ENCODE measurements at regions of chr3 and their contacts with region 1.

Region 1: DNA sequence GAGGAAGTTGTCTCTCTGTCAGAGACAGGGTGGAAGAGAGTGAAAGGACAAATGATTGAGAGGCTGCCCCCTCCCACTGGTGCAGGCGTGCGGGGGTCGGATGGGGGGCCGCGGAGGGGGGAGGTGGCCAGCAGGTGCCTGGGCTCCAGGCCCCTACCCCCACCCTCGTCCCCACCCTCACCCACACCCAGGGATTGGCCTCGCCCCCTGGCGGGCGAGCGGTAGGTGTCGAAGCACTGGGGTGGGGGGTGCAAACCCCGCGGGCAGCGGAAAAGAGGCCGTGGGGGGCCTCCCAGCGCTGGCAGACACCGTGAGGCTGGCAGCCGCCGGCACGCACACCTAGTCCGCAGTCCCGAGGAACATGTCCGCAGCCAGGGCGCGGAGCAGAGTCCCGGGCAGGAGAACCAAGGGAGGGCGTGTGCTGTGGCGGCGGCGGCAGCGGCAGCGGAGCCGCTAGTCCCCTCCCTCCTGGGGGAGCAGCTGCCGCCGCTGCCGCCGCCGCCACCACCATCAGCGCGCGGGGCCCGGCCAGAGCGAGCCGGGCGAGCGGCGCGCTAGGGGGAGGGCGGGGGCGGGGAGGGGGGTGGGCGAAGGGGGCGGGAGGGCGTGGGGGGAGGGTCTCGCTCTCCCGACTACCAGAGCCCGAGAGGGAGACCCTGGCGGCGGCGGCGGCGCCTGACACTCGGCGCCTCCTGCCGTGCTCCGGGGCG is at the start of gene KAT2B:
- DNase-seq: peak; percentile 84 to 92 (median 85)
- ATAC-seq: peak; percentile 68 to 84 (median 78)
- H3K4me3 ChIP-seq: peak within 1 kb of the TSS; percentile 59 to 95 (median 85)
- H3K27ac ChIP-seq: peak within 1 kb of the TSS; percentile 93 to 99 (median 98)
- H3K4me1 ChIP-seq: peaks cover 4 to 51% (median 40%) of the 10 kb centered on the region in 12 donors
- H3K27me3 ChIP-seq: no peaks in the 10 kb centered on the region
- CTCF ChIP-seq: peak; percentile 57 to 89 (median 71)
- POLR2A ChIP-seq: peak in 1 of 2 donors; percentile 48
- total RNA-seq, gene KAT2B: 45.9 to 82.8 (median 70.2) TPM

Region 2: DNA sequence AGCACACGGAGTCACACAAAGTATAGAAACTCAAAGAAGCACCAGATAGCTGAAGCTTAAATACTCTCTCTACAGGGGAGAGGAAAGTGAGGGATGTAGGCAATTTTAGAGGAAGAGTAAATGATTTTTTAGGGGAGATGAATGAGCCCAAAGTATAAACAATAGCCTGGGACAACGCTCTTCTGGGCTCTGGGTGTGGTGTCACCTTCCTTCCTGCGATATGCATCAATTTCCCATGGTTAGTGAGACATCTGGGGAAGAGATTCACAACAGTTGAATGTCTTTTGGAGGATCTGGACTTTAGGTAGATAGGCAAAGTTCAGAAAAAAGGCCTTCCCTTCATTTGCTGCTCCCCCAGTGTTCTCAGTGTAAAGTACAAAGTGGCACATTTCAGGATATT is 231.1 kb before region 1 on chr3:
- intact Hi-C with region 1: loop called in 1 of 10 experiments (anchors 5 kb)
- DNase-seq: no peak
- ATAC-seq: peak in 2 of 4 donors; percentile 39 to 86
- H3K4me3 ChIP-seq: no peak overlapping the region
- H3K27ac ChIP-seq: peak overlapping the region in 5 of 12 donors; percentile 2 to 49 (median 39)
- H3K4me1 ChIP-seq: peaks cover 0 to 3% (median 0%) of the 10 kb centered on the region in 12 donors
- H3K27me3 ChIP-seq: no peaks in the 10 kb centered on the region
- CTCF ChIP-seq: no peak
- POLR2A ChIP-seq: no peak

Region 3: DNA sequence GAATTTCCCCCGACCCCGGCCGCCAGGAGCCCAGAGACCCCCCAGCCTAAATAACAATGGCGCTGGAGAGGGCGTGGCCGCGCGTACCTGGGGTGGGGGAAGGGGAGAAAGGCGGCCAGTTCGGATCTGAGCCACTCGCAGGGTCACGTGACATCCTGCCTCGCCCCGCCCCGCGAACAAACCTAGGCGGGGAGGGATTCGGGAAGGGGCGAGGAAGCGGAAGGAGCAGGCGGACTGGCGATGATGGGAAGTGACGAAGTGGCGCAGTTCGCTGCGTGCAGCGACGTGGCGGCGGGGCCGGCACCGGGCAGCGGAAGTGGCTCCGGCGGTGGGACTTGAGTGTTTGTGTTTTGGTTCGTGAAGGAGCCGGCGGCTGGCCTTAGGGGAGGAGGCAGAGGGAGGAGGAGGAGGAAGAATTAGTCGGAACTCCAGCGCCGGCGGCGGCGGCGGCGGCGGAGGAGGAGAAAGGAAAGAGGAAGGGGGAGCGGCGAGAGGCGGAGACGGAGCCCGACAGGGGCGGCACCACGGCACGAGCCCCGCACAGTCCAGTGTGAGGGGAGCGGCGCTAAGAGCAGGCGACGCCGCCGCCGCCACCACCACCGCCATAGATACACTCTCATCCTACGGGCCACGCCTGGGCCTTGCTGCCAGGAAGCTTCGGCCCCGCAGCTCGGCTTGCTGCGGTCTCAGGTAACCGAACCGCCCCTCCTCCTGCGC is 92.9 kb before region 1 on chr3 and contains the start of gene RAB5A:
- intact Hi-C with region 1: loop called in 9 of 10 experiments (anchors 1 to 5 kb)
- DNase-seq: peak; percentile 98
- ATAC-seq: peak; percentile 97 to 99 (median 98)
- H3K4me3 ChIP-seq: peak within 1 kb of the TSS; percentile 65 to 99 (median 90)
- H3K27ac ChIP-seq: peak within 1 kb of the TSS; percentile 93 to 99 (median 98)
- H3K4me1 ChIP-seq: peaks cover 7 to 44% (median 25%) of the 10 kb centered on the region in 12 donors
- H3K27me3 ChIP-seq: no peaks in the 10 kb centered on the region
- CTCF ChIP-seq: no peak
- POLR2A ChIP-seq: peak in 1 of 2 donors; percentile 69
- total RNA-seq, gene RAB5A: 34.9 to 74.0 (median 61.9) TPM

Region 4: GRCh38 chr3:20080956-20081554 is 41.1 kb after region 1 on chr3:
- intact Hi-C with region 1: loop called in 5 of 10 experiments (anchors 5 kb)
- DNase-seq: peak; percentile 82 to 93 (median 86)
- ATAC-seq: peak; percentile 99 to 100 (median 100)
- H3K4me3 ChIP-seq: no peak overlapping the region
- H3K27ac ChIP-seq: peak overlapping the region; percentile 6 to 74 (median 54)
- H3K4me1 ChIP-seq: peaks cover 10 to 24% (median 20%) of the 10 kb centered on the region in 12 donors
- H3K27me3 ChIP-seq: no peaks in the 10 kb centered on the region
- CTCF ChIP-seq: no peak
- POLR2A ChIP-seq: no peak

Region 5: GRCh38 chr3:20141851-20142250 is 101.9 kb after region 1 on chr3:
- intact Hi-C with region 1: loop called in 3 of 10 experiments (anchors 5 kb)
- DNase-seq: peak in 4 of 5 donors; percentile 56 to 75 (median 69)
- ATAC-seq: peak; percentile 96 to 99 (median 98)
- H3K4me3 ChIP-seq: peak overlapping the region in 1 of 12 donors; percentile 27
- H3K27ac ChIP-seq: peak overlapping the region in 9 of 12 donors; percentile 20 to 77 (median 64)
- H3K4me1 ChIP-seq: peaks cover 0 to 18% (median 9%) of the 10 kb centered on the region in 12 donors
- H3K27me3 ChIP-seq: no peaks in the 10 kb centered on the region
- CTCF ChIP-seq: peak in 1 of 12 donors; percentile 12
- POLR2A ChIP-seq: no peak